Activated B cell treated with CpG ODN at 0.5 μM for 24 hours (primary cell): ENCODE measurements at regions of chr6 and their contacts with region 1.

Region 1: GRCh38 chr6:122751326-122751725 is 28.2 kb upstream of the FABP7 start:
- DNase-seq: no peak
- ATAC-seq: peak; percentile 67
- H3K4me3 Mint-ChIP-seq: peak overlapping the region; percentile 60
- H3K27ac Mint-ChIP-seq: peak overlapping the region; percentile 85
- H3K4me1 Mint-ChIP-seq: peaks cover 44% of the 10 kb centered on the region
- H3K27me3 Mint-ChIP-seq: no peaks in the 10 kb centered on the region
- CTCF ChIP-seq: no peak

Region 2: DNA sequence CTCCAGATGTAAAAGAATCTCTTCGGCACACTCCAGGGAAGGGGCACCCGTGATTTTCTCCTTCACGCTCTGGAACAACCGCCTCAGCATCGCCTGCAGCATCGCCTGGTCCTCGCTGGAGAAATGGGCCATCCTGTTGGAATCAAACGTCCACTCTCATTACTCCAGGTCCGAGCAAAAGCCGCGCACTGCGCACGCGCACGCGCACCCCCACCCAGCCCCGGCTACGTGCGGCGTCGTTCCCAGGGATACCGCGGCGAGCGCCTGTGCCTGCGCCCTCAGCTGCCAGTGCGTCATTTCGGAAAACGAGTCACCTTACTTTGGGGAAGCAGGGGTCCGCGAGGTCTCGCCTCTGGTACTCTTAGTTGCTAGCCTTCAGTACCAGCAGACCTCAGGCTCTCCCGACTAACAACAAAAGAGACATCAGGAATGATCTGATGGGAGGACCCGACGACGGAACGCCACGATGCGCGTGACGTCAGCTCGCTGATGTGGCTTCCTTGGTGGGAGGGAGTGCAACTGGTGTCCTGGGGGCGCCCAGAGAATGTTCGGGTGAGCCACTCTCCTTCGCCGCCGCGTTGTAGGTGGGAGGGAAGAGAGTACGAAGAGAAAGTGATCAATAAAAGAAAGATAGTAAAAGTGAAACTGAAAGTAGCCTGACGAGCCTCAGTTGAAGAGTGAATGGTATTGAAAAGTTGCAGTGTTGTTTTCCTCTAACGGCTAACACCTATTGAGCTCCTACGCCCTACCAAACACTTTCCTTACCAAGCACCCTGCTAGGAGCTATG is 1416.8 kb before region 1 on chr6 and contains the start of gene TBC1D32:
- CTCF ChIA-PET with region 1: no interaction called
- POLR2A ChIA-PET with region 1: no interaction called
- intact Hi-C with region 1: loop called (anchors 10 kb)
- DNase-seq: peak; percentile 88
- ATAC-seq: peak; percentile 89
- H3K4me3 Mint-ChIP-seq: peak within 1 kb of the TSS; percentile 94
- H3K27ac Mint-ChIP-seq: peak within 1 kb of the TSS; percentile 96
- H3K4me1 Mint-ChIP-seq: peaks cover 31% of the 10 kb centered on the region
- H3K27me3 Mint-ChIP-seq: no peaks in the 10 kb centered on the region
- CTCF ChIP-seq: no peak
- total RNA-seq, gene TBC1D32: 11.3 and 17.8 TPM in 2 replicates

Region 3: GRCh38 chr6:122789182-122790027 is 38.1 kb after region 1 on chr6 and contains the start of gene SMPDL3A:
- CTCF ChIA-PET with region 1: no interaction called
- POLR2A ChIA-PET with region 1: interaction called, 5 read pairs
- intact Hi-C with region 1: loop called (anchors 1 kb)
- DNase-seq: peak; percentile 39
- ATAC-seq: peak; percentile 70
- H3K4me3 Mint-ChIP-seq: peak within 1 kb of the TSS; percentile 94
- H3K27ac Mint-ChIP-seq: peak within 1 kb of the TSS; percentile 84
- H3K4me1 Mint-ChIP-seq: peaks cover 25% of the 10 kb centered on the region
- H3K27me3 Mint-ChIP-seq: peaks cover 26% of the 10 kb centered on the region
- CTCF ChIP-seq: no peak
- total RNA-seq, gene SMPDL3A: 1.5 and 1.8 TPM in 2 replicates

Region 4: DNA sequence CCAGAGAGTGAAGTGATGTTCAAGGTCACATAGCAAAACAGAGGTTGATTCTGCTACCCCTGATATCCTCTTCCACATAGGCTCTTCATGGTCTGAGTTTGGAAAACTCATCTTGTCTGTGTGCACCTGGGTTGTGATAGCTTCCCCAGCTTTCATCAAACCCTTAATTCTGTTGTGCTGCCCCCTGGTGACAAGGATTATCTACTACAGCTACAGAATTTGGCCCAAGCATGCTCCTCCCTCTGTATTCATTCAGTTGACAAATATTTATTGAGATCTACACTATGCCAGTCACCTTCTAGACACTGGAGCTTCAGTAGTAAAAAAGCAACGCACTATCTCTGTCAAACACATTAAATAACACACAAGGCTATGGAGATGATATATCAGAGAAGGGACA is 88.2 kb after region 1 on chr6:
- CTCF ChIA-PET with region 1: interaction called, 25 read pairs
- POLR2A ChIA-PET with region 1: no interaction called
- intact Hi-C with region 1: no loop called
- DNase-seq: no peak
- ATAC-seq: peak; percentile 58
- H3K4me3 Mint-ChIP-seq: no peak overlapping the region
- H3K27ac Mint-ChIP-seq: no peak overlapping the region
- H3K4me1 Mint-ChIP-seq: no peaks in the 10 kb centered on the region
- H3K27me3 Mint-ChIP-seq: peaks cover 7% of the 10 kb centered on the region
- CTCF ChIP-seq: no peak

Region 5: GRCh38 chr6:122853259-122853995 is 102.1 kb after region 1 on chr6:
- CTCF ChIA-PET with region 1: no interaction called
- POLR2A ChIA-PET with region 1: no interaction called
- intact Hi-C with region 1: no loop called
- DNase-seq: no peak
- ATAC-seq: peak; percentile 50
- H3K4me3 Mint-ChIP-seq: no peak overlapping the region
- H3K27ac Mint-ChIP-seq: no peak overlapping the region
- H3K4me1 Mint-ChIP-seq: peaks cover 12% of the 10 kb centered on the region
- H3K27me3 Mint-ChIP-seq: no peaks in the 10 kb centered on the region
- CTCF ChIP-seq: no peak